ENCODE measurements at regions of chr9 and their contacts with region 1.

Region 1: GRCh38 chr9:137223078-137223970 is 1.3 kb upstream of the RNF208 start:
- DNase-seq: peak; percentile 95 to 98
- ATAC-seq: peak; percentile 44 to 76
- H3K4me3 ChIP-seq: peak overlapping the region; percentile 72
- H3K27ac ChIP-seq: peak overlapping the region; percentile 89 to 93
- H3K4me1 ChIP-seq: peaks cover 66% of the 10 kb centered on the region
- CTCF ChIP-seq: no peak
- EP300 ChIP-seq: no peak
- POLR2A ChIP-seq: peak; percentile 60
- RAD21 ChIP-seq: no peak

Region 2: DNA sequence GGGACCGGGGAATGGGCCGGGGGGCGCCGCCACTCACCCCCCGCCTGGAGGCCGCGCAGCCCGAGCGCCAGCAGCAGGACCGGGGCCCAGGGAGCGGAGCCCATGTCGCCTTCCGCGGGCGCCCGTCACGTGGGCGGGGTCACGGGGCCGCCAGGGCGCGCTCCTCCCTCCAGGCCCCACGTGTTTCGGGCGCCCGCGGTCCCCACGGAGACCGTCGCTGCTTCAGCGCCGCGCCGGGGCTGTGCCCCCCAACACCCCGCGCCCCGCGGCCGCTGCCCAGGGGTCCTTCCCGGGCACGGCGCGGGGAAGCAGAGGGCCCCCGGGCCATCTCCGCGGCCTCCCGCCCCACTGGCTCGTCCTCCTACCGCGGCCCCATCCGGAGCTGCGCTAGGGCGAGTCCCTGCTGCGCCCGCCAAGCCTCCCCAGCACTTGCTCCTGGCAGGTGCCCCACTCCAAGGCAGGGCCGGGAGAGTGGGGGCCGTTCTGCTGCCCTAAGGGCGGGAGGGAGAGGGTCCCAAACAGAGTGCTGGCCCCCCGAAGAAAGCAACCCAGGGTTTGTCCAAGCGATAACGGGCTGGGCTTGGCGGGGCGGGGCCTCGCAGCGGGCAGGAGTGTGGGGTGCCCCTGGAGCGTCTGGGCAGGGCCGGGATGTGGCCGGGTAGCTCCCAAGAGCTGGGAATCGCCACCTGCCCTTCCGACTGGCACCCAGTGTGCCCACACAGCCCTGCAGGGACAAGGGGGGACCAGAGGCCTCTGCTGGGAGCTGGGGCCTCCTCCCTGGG is 108.5 kb before region 1 on chr9 and contains the start of gene DPP7:
- CTCF ChIA-PET with region 1: interaction called, 113 read pairs
- POLR2A ChIA-PET with region 1: no interaction called
- DNase-seq: peak; percentile 59 to 76
- ATAC-seq: peak; percentile 78 to 79
- H3K4me3 ChIP-seq: peak within 1 kb of the TSS; percentile 69
- H3K27ac ChIP-seq: peak within 1 kb of the TSS; percentile 96 to 97
- H3K4me1 ChIP-seq: peaks cover 6% of the 10 kb centered on the region; the same call in 2 of the 3 replicates
- CTCF ChIP-seq: no peak
- EP300 ChIP-seq: no peak
- POLR2A ChIP-seq: peak; percentile 65
- RAD21 ChIP-seq: no peak
- polyA plus RNA-seq, gene DPP7: 27.6 and 36.0 TPM in 2 replicates

Region 3: GRCh38 chr9:137162505-137163100 is 60.7 kb before region 1 on chr9:
- CTCF ChIA-PET with region 1: interaction called, 10 read pairs
- POLR2A ChIA-PET with region 1: interaction called, 8 read pairs
- DNase-seq: peak in 1 of 2 experiments; percentile 64
- ATAC-seq: peak; percentile 25 to 48; a peak in 4 of 6 replicates
- H3K4me3 ChIP-seq: peak overlapping the region; percentile 38
- H3K27ac ChIP-seq: peak overlapping the region; percentile 54 to 85
- H3K4me1 ChIP-seq: peaks cover 27% of the 10 kb centered on the region
- CTCF ChIP-seq: peak; percentile 14; the same call in 1 of the 3 replicates
- EP300 ChIP-seq: no peak
- POLR2A ChIP-seq: no peak
- RAD21 ChIP-seq: no peak

Region 4: GRCh38 chr9:137176302-137177182 is 46.8 kb before region 1 on chr9:
- CTCF ChIA-PET with region 1: interaction called, 17 read pairs
- POLR2A ChIA-PET with region 1: interaction called, 5 read pairs
- DNase-seq: peak; percentile 73 to 91
- ATAC-seq: peak; percentile 78 to 85
- H3K4me3 ChIP-seq: no peak overlapping the region
- H3K27ac ChIP-seq: no peak overlapping the region
- H3K4me1 ChIP-seq: no peaks in the 10 kb centered on the region
- CTCF ChIP-seq: peak; percentile 54
- EP300 ChIP-seq: no peak
- POLR2A ChIP-seq: no peak
- RAD21 ChIP-seq: peak; percentile 24 to 48; a peak in 2 of 5 replicates

Region 5: DNA sequence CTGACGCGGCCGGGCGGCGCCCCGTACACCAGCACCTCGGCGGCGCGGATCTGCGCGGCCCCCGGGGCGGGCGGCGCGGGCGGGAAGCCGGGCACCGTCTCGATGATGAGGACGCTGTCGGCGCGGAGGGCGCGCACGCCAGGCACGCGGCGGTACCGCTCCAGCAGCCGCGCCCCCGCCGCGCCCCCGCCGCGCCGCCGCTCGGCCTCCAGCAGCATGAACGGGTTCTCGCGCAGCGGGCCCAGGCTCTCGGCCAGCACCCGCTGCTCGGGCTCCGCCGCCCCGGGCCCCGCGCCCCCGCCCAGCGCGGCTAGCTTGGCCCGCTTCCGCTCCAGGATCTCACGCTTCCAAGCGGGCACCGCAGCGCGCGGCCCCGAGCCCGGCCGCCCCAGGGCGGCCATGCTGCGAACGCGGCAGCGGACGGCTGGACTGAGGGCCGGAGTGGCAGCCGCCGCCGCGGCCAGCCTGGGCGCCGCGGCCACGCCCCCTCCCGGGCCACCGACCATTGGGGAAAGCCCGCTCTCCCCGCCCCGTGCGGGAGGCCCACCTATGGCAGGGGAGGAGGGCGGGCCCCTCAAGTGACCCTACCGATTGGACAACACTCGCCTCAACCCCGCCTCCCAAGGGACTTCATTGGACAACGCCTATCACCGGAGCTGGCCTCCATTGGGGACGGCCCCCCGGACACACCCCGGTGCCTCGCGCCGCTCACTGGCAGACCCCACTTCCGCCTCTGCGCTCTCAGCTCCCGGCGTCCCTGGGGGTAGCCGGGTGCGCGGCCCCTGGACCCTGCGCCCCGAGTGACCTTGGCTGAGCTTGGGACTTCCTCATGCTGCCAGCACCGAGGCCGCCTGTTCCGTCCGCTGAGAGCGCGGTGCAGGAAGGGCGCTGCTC is 22.8 kb before region 1 on chr9 and contains the start of gene TPRN:
- CTCF ChIA-PET with region 1: interaction called, 32 read pairs
- POLR2A ChIA-PET with region 1: interaction called, 27 read pairs
- DNase-seq: peak; percentile 98 to 100
- ATAC-seq: peak; percentile 87 to 96
- H3K4me3 ChIP-seq: peak within 1 kb of the TSS; percentile 60
- H3K27ac ChIP-seq: peak within 1 kb of the TSS; percentile 80 to 87
- H3K4me1 ChIP-seq: peaks cover 38% of the 10 kb centered on the region
- CTCF ChIP-seq: no peak
- EP300 ChIP-seq: no peak
- POLR2A ChIP-seq: peak; percentile 82
- RAD21 ChIP-seq: no peak
- polyA plus RNA-seq, gene TPRN: 2.1 and 2.4 TPM in 2 replicates

Region 6: DNA sequence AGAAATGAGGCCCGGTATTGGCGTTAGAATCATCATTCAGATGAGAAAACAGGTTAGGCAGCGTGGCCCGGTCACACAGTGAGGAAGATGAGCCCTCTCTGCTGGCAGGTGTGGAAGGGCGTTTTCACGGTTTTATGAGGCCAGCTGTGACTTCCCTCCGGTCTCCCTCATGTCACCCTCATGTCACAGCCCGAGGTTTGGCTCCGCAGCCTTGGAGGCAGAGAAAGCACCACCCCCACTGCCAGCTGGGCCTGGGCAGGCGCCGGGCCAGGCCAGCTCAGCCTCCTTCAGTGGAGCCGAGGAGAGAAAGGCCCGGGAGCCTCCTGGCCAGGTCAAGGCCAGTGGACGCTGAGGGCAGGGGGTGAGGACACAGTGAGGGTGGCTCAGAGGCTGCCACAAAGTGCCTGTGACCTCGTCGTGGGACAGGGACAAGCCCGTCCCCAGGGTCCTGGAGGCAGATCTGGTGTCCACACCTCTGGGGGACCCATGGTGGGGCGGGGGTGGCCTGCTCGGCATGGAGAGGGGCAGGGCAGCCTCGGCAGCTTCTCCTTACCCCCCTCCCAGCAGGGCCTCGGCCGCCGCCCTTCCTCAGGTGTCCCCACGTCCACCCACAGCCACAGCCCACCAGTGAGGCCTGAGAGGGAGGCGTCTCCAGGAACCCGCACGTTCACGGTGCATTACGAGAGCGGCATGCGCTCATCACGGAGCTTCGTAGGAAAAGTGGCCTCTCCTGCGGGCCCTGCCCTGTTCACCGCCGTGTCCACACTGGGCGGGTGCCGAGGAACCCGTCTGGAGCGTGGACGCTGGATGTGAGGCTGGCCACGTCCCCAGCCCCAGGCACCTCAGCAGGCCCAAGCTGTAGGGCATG is 167.5 kb after region 1 on chr9:
- CTCF ChIA-PET with region 1: no interaction called
- POLR2A ChIA-PET with region 1: no interaction called
- DNase-seq: no peak
- ATAC-seq: peak; percentile 8 to 27; a peak in 4 of 6 replicates
- H3K4me3 ChIP-seq: no peak overlapping the region
- H3K27ac ChIP-seq: no peak overlapping the region
- H3K4me1 ChIP-seq: peaks cover 4% of the 10 kb centered on the region
- CTCF ChIP-seq: no peak
- EP300 ChIP-seq: no peak
- POLR2A ChIP-seq: no peak
- RAD21 ChIP-seq: no peak

Measured in A549 (cell line).